Panc1 (cell line): ENCODE measurements at regions of chr19 and their contacts with region 1.

Region 1: GRCh38 chr19:50568321-50569075 is at the start of gene LRRC4B:
- DNase-seq: no peak
- ATAC-seq: no peak
- H3K4me3 ChIP-seq: peak within 1 kb of the TSS in 1 of 2 experiments; percentile 12; a peak in 1 of 4 replicates
- H3K27ac ChIP-seq: no peak within 1 kb of the TSS
- H3K4me1 ChIP-seq: no peaks in the 10 kb centered on the region
- H3K27me3 ChIP-seq: no peaks in the 10 kb centered on the region; the same call in 1 of the 2 replicates
- CTCF ChIP-seq: no peak
- total RNA-seq, gene LRRC4B: 0.57 TPM

Region 2: DNA sequence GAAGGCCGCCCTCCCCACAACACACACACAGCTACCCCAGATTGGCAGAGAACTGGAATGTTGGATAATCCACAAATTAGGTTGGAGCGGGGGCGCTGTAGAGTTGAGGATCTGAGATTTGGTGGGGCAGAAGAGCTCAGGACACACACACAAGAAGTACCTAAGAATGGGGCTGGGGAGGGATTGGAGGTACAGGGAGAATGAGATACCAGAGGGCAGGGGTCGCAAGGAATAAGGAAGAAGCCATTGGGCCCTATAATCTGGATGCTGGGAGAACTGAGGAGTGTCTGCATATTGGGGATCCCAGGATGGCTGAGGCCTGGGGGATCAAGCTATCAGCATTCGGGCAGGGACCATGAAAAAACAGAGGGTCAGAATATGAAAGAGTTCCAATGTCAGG is 59.6 kb after region 1 on chr19:
- CTCF ChIA-PET with region 1: interaction called, 13 read pairs
- POLR2A ChIA-PET with region 1: no interaction called
- in situ Hi-C with region 1: no loop called
- intact Hi-C with region 1: no loop called
- DNase-seq: no peak
- ATAC-seq: no peak
- H3K4me3 ChIP-seq: no peak overlapping the region
- H3K27ac ChIP-seq: no peak overlapping the region
- H3K4me1 ChIP-seq: no peaks in the 10 kb centered on the region
- H3K27me3 ChIP-seq: no peaks in the 10 kb centered on the region
- CTCF ChIP-seq: no peak

Region 3: GRCh38 chr19:50639121-50640112 is 70.9 kb after region 1 on chr19 and contains the start of gene SYT3:
- CTCF ChIA-PET with region 1: no interaction called
- POLR2A ChIA-PET with region 1: no interaction called
- in situ Hi-C with region 1: no loop called
- intact Hi-C with region 1: no loop called
- DNase-seq: no peak
- ATAC-seq: peak; percentile 73; the same call in 1 of the 2 replicates
- H3K4me3 ChIP-seq: peak within 1 kb of the TSS; percentile 15 to 41
- H3K27ac ChIP-seq: no peak within 1 kb of the TSS
- H3K4me1 ChIP-seq: no peaks in the 10 kb centered on the region
- H3K27me3 ChIP-seq: peaks cover 7% of the 10 kb centered on the region
- CTCF ChIP-seq: no peak
- total RNA-seq, gene SYT3: not detected